Tibial artery (tissue), 4 donors: ENCODE measurements at regions of chr16 and their contacts with region 1.

Region 1: DNA sequence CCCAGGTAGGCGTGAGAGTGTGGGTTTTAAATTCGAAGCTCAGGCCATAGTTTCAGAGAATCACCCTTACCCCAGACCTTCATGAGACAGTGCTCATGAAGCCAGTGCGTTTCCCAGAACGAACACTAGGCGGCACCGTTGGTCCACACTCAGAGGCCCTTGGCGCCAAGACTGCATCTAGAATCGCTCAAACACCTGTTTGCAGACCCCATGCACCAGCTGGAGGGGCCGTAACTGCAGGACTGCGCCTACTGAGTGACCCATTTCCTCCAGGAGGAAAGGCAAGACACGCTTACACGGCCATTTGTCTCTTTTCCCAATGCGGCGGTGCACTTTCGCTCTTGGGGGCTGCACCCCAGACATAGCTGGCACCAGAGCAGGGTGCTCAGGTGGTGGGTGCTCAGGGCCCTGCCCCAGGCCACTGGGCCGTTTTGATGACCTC is 34.0 kb downstream of the ADGRG5 start:
- DNase-seq: peak; percentile 76 to 78
- H3K4me3 ChIP-seq: no peak overlapping the region
- H3K27ac ChIP-seq: no peak overlapping the region
- H3K4me1 ChIP-seq: peaks cover 0 to 5% (median 2%) of the 10 kb centered on the region in 4 donors
- H3K27me3 ChIP-seq: peaks cover 0 to 37% of the 10 kb centered on the region in 2 donors
- CTCF ChIP-seq: peak; percentile 80 to 94

Region 2: DNA sequence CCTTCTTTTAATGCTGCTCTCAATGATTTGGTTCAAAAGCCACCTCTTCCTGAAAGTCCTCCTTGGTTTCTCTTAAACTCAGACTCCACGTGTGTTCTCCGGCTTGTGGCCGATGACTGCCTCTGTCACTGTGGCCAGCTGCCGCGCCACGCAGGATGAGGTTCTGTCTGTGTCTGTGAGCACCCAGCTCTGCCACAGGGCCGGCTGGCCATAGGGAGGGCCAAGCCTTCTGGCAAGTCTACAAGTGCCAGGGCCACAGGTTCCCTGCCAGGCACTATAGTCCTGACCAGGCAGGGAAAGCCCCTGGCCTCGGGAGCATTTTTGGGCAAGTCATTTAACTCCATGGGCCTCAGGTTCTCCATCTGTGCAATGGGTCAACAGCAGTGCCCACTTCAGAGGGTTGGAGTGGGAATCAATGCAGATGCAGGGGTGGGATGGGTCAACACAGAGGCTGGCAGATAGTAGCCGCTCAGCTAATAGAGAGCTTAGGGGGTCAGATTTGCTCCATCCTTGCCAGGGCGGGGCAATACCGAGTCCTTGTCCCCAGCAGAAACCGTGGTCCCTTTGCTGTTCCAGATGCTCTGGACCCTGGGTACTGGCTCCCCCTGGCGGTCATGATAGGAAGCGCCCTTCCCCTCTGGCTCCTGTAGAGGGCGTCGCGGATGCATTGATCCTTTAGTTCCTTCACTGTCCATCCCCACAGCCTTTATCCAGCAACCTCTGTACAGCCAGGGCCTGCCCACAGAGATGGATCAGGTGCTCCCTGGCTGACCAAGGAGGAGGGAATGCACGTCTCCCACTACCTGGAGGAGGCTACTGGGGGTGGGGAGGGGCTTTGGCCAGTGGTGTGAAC is 72.4 kb after region 1 on chr16:
- intact Hi-C with region 1: loop called (anchors 5 kb)
- DNase-seq: peak; percentile 60 to 75
- H3K4me3 ChIP-seq: no peak overlapping the region
- H3K27ac ChIP-seq: no peak overlapping the region
- H3K4me1 ChIP-seq: peaks cover 0 to 6% (median 0%) of the 10 kb centered on the region in 4 donors
- H3K27me3 ChIP-seq: peaks cover 0 to 49% of the 10 kb centered on the region in 2 donors
- CTCF ChIP-seq: peak; percentile 96 to 97